ENCODE measurements at regions of chr4 and their contacts with region 1.

Region 1: GRCh38 chr4:161237495-161237894 is 926.3 kb downstream of the FSTL5 start:
- DNase-seq: no peak
- ATAC-seq: no peak

Region 2: GRCh38 chr4:161273607-161274006 is 36.1 kb after region 1 on chr4:
- intact Hi-C with region 1: loop called (anchors 1 kb)
- DNase-seq: no peak
- ATAC-seq: no peak

Region 3: GRCh38 chr4:161342881-161343568 is 105.5 kb after region 1 on chr4:
- intact Hi-C with region 1: no loop called
- DNase-seq: no peak
- ATAC-seq: no peak

Measured in sciatic nerve (tissue), 2 donors.